Stomach (tissue), 19 donors: ENCODE measurements at regions of chr4 and their contacts with region 1.

Region 1: DNA sequence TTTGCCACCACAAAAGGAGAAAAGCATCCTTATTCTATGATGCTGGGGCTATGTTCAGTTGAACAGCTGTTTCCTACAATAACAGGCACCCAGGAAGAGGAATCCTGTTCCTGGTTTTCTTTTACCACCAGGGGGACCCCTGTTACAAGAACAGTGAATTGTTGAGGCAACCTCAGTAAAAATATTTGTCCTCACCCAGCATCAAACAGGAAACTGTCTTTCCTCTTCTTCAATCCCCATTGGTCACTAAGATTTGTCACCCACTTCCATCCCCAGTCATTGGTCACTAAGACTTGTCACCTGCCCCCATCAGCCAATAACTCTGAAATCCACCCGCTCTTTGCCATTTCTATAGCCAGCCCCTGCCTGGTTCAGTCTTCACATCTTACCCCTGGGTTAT is 143.5 kb upstream of the GALNT7 start:
- DNase-seq: peak; percentile 55 to 88
- H3K4me3 ChIP-seq: no peak overlapping the region
- H3K27ac ChIP-seq: peak overlapping the region in 1 of 5 donors; percentile 47
- H3K4me1 ChIP-seq: peaks cover 0 to 14% (median 8%) of the 10 kb centered on the region in 4 donors
- H3K27me3 ChIP-seq: no peaks in the 10 kb centered on the region
- CTCF ChIP-seq: peak in 5 of 7 experiments; percentile 59 to 85 (median 68)
- EP300 ChIP-seq: no peak
- POLR2A ChIP-seq: no peak

Region 2: DNA sequence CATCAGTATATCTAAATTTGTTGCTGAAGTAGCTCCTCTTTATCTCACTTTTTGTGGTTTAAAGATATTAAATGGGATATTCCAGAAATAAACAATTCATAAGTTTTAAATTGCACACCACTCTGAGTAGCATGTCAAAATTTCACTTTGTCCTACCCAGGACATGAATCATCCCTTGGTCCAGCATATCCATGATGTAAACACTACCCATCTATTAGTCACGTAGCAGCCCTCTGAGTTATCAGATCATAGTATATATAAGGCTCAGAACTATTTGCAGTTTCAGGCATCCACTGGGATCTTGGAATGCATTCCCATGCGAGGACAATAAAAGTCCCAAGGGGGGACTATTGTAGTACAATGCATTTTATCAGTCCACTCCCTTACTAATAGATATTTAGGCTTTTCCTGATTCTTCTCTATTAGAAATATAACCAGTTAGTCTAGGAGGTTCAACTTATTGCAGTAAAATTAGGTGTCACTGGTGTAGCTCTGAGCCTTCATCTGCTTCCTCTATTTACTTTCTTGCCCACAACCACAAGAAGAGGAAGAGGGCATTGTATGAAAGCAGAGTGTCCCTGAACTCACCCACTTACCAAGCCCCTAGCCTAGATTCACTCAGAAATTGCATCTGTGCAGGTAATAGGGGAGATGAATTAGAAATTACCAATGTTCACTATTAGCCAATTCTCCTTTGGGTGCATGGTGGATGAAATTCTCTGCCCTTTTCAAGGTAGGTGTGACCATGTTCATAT is 266.4 kb before region 1 on chr4:
- intact Hi-C with region 1: no loop called
- DNase-seq: no peak
- H3K4me3 ChIP-seq: no peak overlapping the region
- H3K27ac ChIP-seq: no peak overlapping the region
- H3K4me1 ChIP-seq: no peaks in the 10 kb centered on the region
- H3K27me3 ChIP-seq: no peaks in the 10 kb centered on the region
- CTCF ChIP-seq: no peak
- EP300 ChIP-seq: no peak
- POLR2A ChIP-seq: no peak

Region 3: GRCh38 chr4:173091362-173091761 is 66.2 kb after region 1 on chr4:
- intact Hi-C with region 1: no loop called
- DNase-seq: no peak
- H3K4me3 ChIP-seq: no peak overlapping the region
- H3K27ac ChIP-seq: no peak overlapping the region
- H3K4me1 ChIP-seq: no peaks in the 10 kb centered on the region
- H3K27me3 ChIP-seq: no peaks in the 10 kb centered on the region
- CTCF ChIP-seq: no peak
- EP300 ChIP-seq: no peak
- POLR2A ChIP-seq: no peak

Region 4: GRCh38 chr4:173169428-173170181 is 144.5 kb after region 1 on chr4:
- intact Hi-C with region 1: loop called (anchors 10 kb)
- DNase-seq: peak; percentile 56 to 91
- H3K4me3 ChIP-seq: peak overlapping the region; percentile 80 to 93 (median 86)
- H3K27ac ChIP-seq: peak overlapping the region; percentile 91 to 98 (median 97)
- H3K4me1 ChIP-seq: peaks cover 15 to 58% (median 37%) of the 10 kb centered on the region in 4 donors
- H3K27me3 ChIP-seq: no peaks in the 10 kb centered on the region
- CTCF ChIP-seq: no peak
- EP300 ChIP-seq: no peak
- POLR2A ChIP-seq: no peak

Region 5: GRCh38 chr4:173301518-173302201 is 276.5 kb after region 1 on chr4:
- intact Hi-C with region 1: loop called (anchors 10 kb)
- DNase-seq: peak in 1 of 2 donors; percentile 60
- H3K4me3 ChIP-seq: no peak overlapping the region
- H3K27ac ChIP-seq: no peak overlapping the region
- H3K4me1 ChIP-seq: peaks cover 0 to 17% (median 4%) of the 10 kb centered on the region in 4 donors
- H3K27me3 ChIP-seq: no peaks in the 10 kb centered on the region
- CTCF ChIP-seq: peak in 5 of 7 experiments; percentile 54 to 81 (median 60)
- EP300 ChIP-seq: no peak
- POLR2A ChIP-seq: no peak

Region 6: DNA sequence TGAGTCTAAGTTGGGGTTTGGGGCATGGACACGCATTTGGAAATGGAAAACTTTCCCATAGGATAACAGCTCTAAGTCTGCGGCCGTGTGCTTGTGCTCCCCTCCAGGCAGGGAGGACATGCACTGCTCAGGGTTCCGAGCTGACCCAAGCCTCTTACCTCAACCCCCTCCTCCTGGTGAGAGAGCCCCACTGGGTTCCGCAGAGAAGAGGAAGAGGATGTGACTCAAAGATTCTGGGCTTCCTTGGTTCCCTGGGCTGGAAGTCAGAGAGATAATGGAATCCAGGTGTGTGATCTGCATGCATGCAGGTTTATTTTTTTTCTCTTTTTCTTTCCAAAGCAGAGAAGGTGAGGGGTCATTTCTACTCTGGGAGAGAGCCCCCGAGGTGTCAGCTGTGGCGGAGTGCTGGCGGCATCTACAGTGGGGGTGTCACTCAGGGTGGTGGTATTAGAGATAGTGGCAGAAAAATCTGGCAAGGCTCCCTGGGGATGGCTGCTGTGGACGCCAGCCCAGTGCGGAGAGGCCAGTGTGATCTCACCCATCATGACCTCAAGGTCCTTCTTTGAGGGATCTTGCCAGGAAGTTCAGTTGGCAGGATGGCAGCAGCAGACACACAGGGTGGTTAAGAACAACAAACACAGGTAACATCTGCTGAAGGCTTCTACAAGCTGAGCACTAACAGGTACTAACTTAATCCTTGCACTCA is 673.6 kb after region 1 on chr4:
- intact Hi-C with region 1: no loop called
- DNase-seq: no peak
- H3K4me3 ChIP-seq: no peak overlapping the region
- H3K27ac ChIP-seq: no peak overlapping the region
- H3K4me1 ChIP-seq: no peaks in the 10 kb centered on the region
- H3K27me3 ChIP-seq: no peaks in the 10 kb centered on the region
- CTCF ChIP-seq: no peak
- EP300 ChIP-seq: no peak
- POLR2A ChIP-seq: no peak

Region 7: DNA sequence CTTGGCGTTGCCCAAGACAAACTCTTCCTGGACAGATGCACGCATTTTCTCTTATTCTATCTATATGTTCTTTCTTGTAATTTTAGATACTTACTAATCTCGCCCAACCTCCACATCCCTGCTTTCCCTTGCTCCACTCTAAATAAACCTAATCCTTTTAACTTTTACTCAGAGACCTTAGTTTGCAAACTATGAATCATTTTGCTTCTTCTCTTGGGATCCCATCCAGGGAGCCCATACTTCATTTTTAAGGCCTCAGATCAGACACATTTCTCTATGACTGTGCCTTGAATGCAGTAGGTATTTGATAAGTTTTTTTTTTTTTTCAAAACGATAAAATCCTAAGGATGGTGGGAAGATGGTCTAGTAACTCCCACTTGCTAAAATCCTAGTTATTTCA is 858.7 kb after region 1 on chr4:
- intact Hi-C with region 1: no loop called
- DNase-seq: no peak
- H3K4me3 ChIP-seq: no peak overlapping the region
- H3K27ac ChIP-seq: no peak overlapping the region
- H3K4me1 ChIP-seq: peaks cover 0 to 7% (median 0%) of the 10 kb centered on the region in 4 donors
- H3K27me3 ChIP-seq: no peaks in the 10 kb centered on the region
- CTCF ChIP-seq: no peak
- EP300 ChIP-seq: no peak
- POLR2A ChIP-seq: no peak